Panc1 (cell line): ENCODE measurements at regions of chr10 and their contacts with region 1.

Region 1: DNA sequence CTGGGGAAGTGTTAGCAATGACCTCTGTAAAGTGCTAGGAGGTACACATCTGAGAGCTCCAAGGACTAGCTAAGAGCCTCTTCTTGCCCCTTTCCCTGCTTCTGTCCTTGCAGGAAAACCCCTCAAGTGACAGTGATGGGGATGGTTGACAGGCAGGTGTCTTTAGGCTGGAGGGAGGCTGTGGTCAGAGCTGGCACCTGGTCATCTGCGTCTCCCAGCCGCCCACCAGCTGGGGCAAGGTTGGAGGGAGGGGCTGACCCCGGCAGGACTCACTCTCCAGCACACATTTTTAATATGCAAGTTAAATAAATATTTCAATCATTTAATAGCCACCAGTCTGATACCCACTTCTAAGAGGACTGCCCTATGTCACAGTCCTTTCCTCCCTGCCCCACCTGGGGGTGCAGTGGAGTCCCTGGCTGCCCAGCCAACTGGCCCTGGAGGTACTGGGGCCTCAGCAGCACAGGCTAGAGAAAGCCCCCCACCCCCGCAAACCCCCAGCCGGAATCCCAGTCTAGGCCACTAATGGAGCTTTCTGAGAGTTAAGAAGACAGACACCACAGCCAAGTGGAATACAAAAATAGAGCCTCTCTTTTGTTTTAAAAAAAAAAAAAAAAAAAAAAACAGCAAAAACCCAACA is 6.3 kb downstream of the FGF8 start:
- DNase-seq: no peak
- ATAC-seq: no peak
- H3K4me3 ChIP-seq: no peak overlapping the region
- H3K27ac ChIP-seq: no peak overlapping the region
- H3K4me1 ChIP-seq: no peaks in the 10 kb centered on the region
- H3K27me3 ChIP-seq: no peaks in the 10 kb centered on the region; the same call in 1 of the 2 replicates
- CTCF ChIP-seq: no peak

Region 2: DNA sequence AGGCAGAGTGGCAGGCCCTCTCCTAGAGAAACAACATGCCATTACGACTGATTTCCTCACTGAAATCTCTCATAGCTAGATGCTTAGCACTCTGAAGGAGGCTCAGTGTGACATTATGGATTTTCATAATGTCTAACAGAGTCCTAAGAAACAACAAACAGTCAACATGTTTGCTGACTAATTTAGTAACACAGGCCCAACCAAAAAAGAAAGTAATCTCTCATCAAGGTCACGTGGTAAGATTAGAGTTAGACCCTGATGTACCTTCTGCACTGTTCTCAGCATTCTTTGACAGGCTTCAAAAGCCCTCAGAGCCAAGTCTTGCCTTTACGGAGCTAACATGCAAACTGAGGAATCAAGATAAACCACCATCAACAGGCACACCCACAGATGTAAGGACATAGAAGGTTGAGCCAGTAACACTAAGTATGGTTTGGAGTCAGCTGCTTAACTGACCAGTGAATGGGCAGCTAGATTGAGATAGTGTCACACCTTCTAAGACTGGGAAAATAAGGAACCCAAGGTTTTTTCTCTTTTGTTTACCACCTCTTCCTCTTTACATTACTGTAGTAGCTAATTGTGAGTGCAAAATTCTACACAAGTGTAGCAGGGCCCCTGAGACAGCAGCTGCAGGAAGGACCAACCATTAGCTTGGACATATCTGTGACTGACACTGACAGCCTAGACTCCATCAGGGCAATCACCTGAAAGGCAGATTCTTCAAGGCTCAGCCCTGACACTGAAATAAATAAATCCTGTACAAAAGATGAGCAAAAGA is 89.3 kb after region 1 on chr10:
- CTCF ChIA-PET with region 1: no interaction called
- POLR2A ChIA-PET with region 1: no interaction called
- in situ Hi-C with region 1: no loop called
- intact Hi-C with region 1: no loop called
- DNase-seq: no peak
- ATAC-seq: no peak
- H3K4me3 ChIP-seq: no peak overlapping the region
- H3K27ac ChIP-seq: no peak overlapping the region
- H3K4me1 ChIP-seq: no peaks in the 10 kb centered on the region
- H3K27me3 ChIP-seq: no peaks in the 10 kb centered on the region
- CTCF ChIP-seq: no peak

Region 3: DNA sequence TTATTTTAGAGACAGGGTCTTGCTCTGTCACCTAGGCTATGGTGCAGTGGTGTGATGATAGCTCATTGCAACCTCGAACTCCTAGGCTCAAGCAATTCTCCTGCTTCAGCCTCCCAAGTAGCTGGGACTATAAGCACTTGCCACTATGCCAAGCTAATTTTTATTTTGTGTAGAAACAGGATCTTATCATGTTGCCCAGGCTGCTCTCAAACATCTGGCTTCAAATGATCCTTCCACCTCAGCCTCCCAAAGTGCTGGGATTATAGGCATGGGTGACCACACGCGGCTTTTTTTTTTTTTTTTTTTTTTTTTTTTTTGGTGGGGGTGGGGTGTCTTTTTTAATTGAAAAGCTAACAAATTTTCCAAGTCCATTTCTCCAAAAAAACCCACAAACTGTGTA is 313.9 kb after region 1 on chr10:
- CTCF ChIA-PET with region 1: interaction called, 15 read pairs
- POLR2A ChIA-PET with region 1: no interaction called
- in situ Hi-C with region 1: no loop called
- intact Hi-C with region 1: no loop called
- DNase-seq: no peak
- ATAC-seq: no peak
- H3K4me3 ChIP-seq: no peak overlapping the region
- H3K27ac ChIP-seq: no peak overlapping the region
- H3K4me1 ChIP-seq: no peaks in the 10 kb centered on the region
- H3K27me3 ChIP-seq: no peaks in the 10 kb centered on the region
- CTCF ChIP-seq: no peak